Spleen (tissue), 13 donors: ENCODE measurements at regions of chr10 and their contacts with region 1.

Region 1: GRCh38 chr10:93554760-93555432 is 11.6 kb upstream of the FFAR4 start:
- DNase-seq: no peak
- H3K4me3 ChIP-seq: no peak overlapping the region
- H3K27ac ChIP-seq: peak overlapping the region in 1 of 8 donors; percentile 38
- H3K4me1 ChIP-seq: peaks cover 0 to 8% (median 0%) of the 10 kb centered on the region in 6 donors
- H3K27me3 ChIP-seq: peaks cover 0 to 22% (median 0%) of the 10 kb centered on the region in 7 donors
- CTCF ChIP-seq: peak; percentile 39 to 78 (median 67)
- POLR2A ChIP-seq: no peak

Region 2: DNA sequence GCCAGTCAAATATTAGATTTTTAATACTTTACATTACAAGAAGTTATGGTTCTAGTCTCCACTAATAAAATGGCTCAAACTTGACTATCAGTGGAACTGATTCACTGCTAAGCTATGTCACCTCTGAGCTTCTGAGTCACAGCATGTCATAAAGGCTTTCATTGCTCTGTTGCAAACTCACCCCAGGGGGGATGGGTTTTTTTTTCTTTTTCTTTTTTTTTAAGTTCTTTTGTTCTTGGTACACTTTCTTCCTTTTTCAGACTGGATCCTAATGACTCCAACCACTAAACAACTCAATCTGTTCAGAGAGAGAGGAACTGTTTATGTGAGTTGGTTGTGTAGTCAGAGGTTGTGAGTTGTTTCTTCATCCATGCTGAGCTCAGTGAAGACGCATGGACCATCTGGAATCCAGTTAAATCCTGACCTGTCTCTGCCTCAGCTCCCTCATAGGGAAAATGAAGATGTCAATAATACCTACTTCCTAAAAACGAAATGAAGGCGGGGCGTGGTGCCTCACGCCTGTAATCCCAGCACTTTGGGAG is 83.7 kb before region 1 on chr10:
- intact Hi-C with region 1: no loop called
- DNase-seq: no peak
- H3K4me3 ChIP-seq: no peak overlapping the region
- H3K27ac ChIP-seq: peak overlapping the region in 5 of 8 donors; percentile 0 to 56 (median 42)
- H3K4me1 ChIP-seq: peaks cover 0 to 22% (median 4%) of the 10 kb centered on the region in 6 donors
- H3K27me3 ChIP-seq: no peaks in the 10 kb centered on the region
- CTCF ChIP-seq: no peak
- POLR2A ChIP-seq: no peak

Region 3: DNA sequence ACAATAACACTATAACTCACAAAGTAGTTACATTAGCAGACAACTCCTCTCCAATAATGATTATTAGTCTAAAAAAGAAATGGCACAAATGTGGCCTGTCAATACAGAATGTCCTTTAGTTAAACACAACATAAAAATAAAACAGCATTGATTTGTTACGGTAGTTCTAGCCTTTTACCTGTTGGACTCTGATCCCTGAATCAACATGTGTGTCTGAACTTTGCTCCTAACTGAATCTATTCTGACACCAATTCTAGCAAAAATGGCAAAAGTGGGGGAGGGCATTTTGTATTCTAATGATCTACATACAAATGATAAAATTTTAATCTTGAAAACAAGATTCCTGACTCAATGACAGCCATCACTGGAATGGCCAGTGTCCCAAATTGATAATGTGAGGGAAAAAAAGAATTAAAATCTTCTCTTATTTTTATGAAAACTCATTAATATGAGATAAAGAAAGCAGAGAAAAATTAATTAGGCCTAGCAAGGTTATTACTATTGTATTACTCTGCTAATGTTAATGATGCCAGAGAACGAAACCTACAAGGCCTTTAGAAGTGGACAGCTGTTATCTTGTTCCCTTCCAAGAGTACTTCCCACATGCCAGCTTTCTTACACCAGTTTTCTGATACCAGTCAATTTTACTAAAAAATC is 117.3 kb after region 1 on chr10:
- intact Hi-C with region 1: loop called (anchors 10 kb)
- DNase-seq: no peak
- H3K4me3 ChIP-seq: no peak overlapping the region
- H3K27ac ChIP-seq: no peak overlapping the region
- H3K4me1 ChIP-seq: no peaks in the 10 kb centered on the region
- H3K27me3 ChIP-seq: no peaks in the 10 kb centered on the region
- CTCF ChIP-seq: no peak
- POLR2A ChIP-seq: no peak